Caco-2 (cell line): ENCODE measurements at regions of chr7 and their contacts with region 1.

Region 1: DNA sequence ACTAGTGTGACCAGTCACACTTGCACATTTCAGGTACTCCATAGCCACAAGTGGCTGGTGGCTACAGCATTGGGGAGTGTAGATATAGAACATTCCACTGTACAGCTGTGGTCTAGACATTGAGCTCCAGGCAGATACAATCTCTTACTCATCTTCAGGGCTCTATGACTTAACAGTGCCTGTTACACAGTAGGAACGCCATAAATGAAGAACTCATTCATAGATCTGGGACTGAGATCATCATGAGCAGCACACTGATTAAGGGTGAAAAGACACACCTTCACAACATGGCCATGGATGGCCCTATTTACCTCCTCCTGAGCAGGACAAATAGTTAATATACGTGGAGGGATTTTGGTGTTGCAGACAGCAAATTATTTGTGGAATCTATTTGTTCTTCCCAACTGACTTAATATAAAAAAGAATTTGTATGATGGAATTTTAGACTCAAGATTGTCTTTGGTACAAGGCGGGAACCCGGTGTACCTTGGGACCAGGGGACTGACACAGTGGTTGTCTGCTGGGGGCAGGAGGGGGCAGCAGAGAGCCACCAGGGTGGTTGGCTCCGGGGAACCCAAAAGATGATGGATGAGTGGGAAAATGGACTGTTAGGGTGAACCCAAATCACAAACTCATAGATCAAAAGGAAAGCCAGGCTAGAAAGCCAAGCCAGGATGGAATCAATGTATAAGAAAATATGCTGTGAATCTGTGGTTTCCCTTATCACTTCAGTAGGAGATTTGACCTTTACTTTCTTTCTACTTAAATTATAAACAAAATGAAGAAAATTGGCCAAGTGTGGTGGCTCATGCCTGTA is 24.3 kb upstream of the CPA2 start:
- DNase-seq: peak; percentile 58 to 79
- H3K4me3 ChIP-seq: no peak overlapping the region
- H3K4me3 Mint-ChIP-seq: no peak overlapping the region
- H3K27ac Mint-ChIP-seq: no peak overlapping the region
- H3K4me1 ChIP-seq: no peaks in the 10 kb centered on the region
- H3K4me1 Mint-ChIP-seq: no peaks in the 10 kb centered on the region
- H3K27me3 ChIP-seq: no peaks in the 10 kb centered on the region
- H3K27me3 Mint-ChIP-seq: no peaks in the 10 kb centered on the region
- CTCF ChIP-seq: peak; percentile 87 to 92

Region 2: DNA sequence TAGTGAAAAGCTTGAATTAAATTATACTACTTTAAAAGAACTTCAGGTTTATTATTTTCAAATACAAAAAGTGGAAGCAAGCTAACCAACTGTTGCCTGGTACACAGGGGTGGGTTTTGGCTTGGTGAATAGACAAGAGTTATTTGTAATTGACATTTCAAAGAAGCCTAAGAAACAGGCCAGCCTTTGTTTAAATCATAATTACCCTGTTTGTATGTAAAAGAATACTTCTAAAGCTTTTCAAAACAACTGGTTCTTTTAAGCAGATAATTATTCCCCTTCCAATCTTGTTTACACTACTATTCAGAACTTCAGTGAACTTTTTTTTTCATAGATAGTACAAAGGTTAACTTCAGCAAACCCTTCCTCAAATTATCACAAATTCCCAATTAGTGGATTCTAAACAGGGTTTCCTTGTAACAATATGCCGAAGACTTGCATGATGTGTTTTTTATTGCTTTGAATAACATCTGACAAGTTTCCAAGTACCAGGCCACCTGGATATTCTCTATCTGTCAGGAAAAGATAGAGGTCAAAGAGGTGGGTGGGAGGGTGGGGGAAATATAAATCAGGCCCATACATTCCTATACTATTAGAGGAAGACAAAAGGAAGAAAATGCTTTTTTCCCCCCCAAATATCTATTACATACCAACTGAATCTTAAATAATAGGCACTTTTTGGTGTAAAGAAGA is 14.4 kb before region 1 on chr7:
- CTCF ChIA-PET with region 1: no interaction called
- POLR2A ChIA-PET with region 1: no interaction called
- intact Hi-C with region 1: no loop called
- DNase-seq: no peak
- H3K4me3 ChIP-seq: no peak overlapping the region
- H3K4me3 Mint-ChIP-seq: no peak overlapping the region
- H3K27ac Mint-ChIP-seq: no peak overlapping the region
- H3K4me1 ChIP-seq: no peaks in the 10 kb centered on the region
- H3K4me1 Mint-ChIP-seq: peaks cover 6% of the 10 kb centered on the region
- H3K27me3 ChIP-seq: no peaks in the 10 kb centered on the region
- H3K27me3 Mint-ChIP-seq: no peaks in the 10 kb centered on the region
- CTCF ChIP-seq: no peak

Region 3: DNA sequence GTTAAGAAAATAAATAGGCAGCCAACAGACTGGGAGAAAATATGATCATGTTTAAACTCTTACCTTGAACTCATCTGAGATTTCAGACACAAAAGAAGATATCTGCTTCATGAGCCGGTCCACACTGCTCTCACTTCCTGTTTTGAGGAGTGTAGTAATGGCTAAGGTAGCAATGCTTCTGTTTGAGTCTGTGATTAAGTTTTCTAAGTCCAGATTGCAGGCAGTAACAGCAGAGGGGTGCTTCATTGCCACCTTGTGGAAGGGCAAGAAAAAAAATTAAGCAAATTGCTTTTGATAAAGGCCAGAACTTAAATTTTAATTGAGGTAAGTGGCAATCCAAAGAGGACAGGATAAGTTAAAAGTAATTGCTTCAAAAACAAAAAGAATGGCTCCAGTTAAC is 318.6 kb after region 1 on chr7:
- CTCF ChIA-PET with region 1: no interaction called
- POLR2A ChIA-PET with region 1: no interaction called
- intact Hi-C with region 1: loop called (anchors 1 kb)
- DNase-seq: peak in 1 of 2 experiments; percentile 25
- H3K4me3 ChIP-seq: no peak overlapping the region
- H3K4me3 Mint-ChIP-seq: no peak overlapping the region
- H3K27ac Mint-ChIP-seq: no peak overlapping the region
- H3K4me1 ChIP-seq: no peaks in the 10 kb centered on the region
- H3K4me1 Mint-ChIP-seq: no peaks in the 10 kb centered on the region
- H3K27me3 ChIP-seq: no peaks in the 10 kb centered on the region
- H3K27me3 Mint-ChIP-seq: no peaks in the 10 kb centered on the region
- CTCF ChIP-seq: peak in 1 of 2 experiments; percentile 43

Region 4: GRCh38 chr7:130721486-130722280 is 479.3 kb after region 1 on chr7:
- CTCF ChIA-PET with region 1: no interaction called
- POLR2A ChIA-PET with region 1: no interaction called
- intact Hi-C with region 1: loop called (anchors 1 kb)
- DNase-seq: peak; percentile 77 to 79
- H3K4me3 ChIP-seq: no peak overlapping the region
- H3K4me3 Mint-ChIP-seq: no peak overlapping the region
- H3K27ac Mint-ChIP-seq: no peak overlapping the region
- H3K4me1 ChIP-seq: no peaks in the 10 kb centered on the region
- H3K4me1 Mint-ChIP-seq: no peaks in the 10 kb centered on the region
- H3K27me3 ChIP-seq: no peaks in the 10 kb centered on the region; the same call in 1 of the 2 replicates
- H3K27me3 Mint-ChIP-seq: no peaks in the 10 kb centered on the region
- CTCF ChIP-seq: peak; percentile 67 to 81

Region 5: GRCh38 chr7:130758429-130759056 is 516.1 kb after region 1 on chr7:
- CTCF ChIA-PET with region 1: no interaction called
- POLR2A ChIA-PET with region 1: no interaction called
- intact Hi-C with region 1: loop called (anchors 1 kb)
- DNase-seq: peak in 1 of 2 experiments; percentile 28
- H3K4me3 ChIP-seq: no peak overlapping the region
- H3K4me3 Mint-ChIP-seq: no peak overlapping the region
- H3K27ac Mint-ChIP-seq: no peak overlapping the region
- H3K4me1 ChIP-seq: no peaks in the 10 kb centered on the region
- H3K4me1 Mint-ChIP-seq: no peaks in the 10 kb centered on the region
- H3K27me3 ChIP-seq: no peaks in the 10 kb centered on the region
- H3K27me3 Mint-ChIP-seq: peaks cover 13% of the 10 kb centered on the region
- CTCF ChIP-seq: peak; percentile 65 to 69